ENCODE measurements at regions of chr19 and their contacts with region 1.

Region 1: GRCh38 chr19:50465986-50466771 is 10.1 kb upstream of the EMC10 start:
- DNase-seq: no peak
- H3K4me3 ChIP-seq: no peak overlapping the region
- H3K27ac ChIP-seq: no peak overlapping the region
- H3K4me1 ChIP-seq: no peaks in the 10 kb centered on the region
- H3K27me3 ChIP-seq: peaks cover 0 to 9% of the 10 kb centered on the region in 2 donors
- CTCF ChIP-seq: no peak
- POLR2A ChIP-seq: no peak

Region 2: DNA sequence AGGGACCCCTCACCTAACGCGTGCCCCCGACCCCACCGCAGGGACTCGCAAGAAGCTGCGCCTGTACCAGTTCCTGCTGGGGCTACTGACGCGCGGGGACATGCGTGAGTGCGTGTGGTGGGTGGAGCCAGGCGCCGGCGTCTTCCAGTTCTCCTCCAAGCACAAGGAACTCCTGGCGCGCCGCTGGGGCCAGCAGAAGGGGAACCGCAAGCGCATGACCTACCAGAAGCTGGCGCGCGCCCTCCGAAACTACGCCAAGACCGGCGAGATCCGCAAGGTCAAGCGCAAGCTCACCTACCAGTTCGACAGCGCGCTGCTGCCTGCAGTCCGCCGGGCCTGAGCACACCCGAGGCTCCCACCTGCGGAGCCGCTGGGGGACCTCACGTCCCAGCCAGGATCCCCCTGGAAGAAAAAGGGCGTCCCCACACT is 38.2 kb before region 1 on chr19:
- intact Hi-C with region 1: loop called (anchors 2 kb)
- DNase-seq: peak; percentile 88 to 89
- H3K4me3 ChIP-seq: peak overlapping the region; percentile 10 to 58 (median 39)
- H3K27ac ChIP-seq: peak overlapping the region; percentile 57 to 58
- H3K4me1 ChIP-seq: peaks cover 0 to 4% of the 10 kb centered on the region in 2 donors
- H3K27me3 ChIP-seq: peaks cover 0 to 4% of the 10 kb centered on the region in 2 donors
- CTCF ChIP-seq: no peak
- POLR2A ChIP-seq: no peak

Region 3: DNA sequence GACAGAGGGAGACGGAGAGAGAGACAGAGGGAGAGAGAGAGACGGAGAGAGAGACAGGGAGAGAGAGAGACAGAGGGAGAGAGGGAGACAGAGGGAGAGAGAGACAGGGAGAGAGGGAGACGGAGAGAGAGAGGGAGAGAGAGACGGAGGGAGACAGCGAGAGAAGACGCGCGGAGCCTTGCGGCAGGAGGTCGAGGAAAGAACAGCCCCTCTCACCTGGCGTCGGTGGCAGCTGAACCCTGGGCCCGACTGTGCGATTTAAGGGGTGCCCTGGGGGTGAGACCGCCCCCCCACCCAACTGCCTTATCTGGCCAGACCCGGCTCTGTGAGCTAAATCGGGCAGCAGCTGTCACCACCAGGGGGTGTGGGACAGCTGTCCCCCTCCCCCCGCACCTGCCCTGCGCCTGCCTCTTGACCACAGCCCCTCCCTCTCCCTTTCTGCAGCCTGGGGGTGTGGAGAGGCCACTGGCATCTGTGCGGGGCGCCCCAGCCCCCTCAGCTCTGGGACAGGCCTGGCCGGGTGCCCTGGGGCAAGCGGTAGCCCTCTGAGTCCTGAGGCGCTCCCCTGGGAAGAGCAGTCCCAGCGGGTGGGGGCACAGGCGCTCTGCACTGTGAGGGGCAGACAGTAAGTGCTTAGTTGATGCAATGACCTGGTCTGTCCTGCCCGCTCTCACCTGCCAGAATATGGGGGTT is 34.0 kb after region 1 on chr19:
- intact Hi-C with region 1: no loop called
- DNase-seq: no peak
- H3K4me3 ChIP-seq: no peak overlapping the region
- H3K27ac ChIP-seq: no peak overlapping the region
- H3K4me1 ChIP-seq: no peaks in the 10 kb centered on the region
- H3K27me3 ChIP-seq: no peaks in the 10 kb centered on the region
- CTCF ChIP-seq: no peak
- POLR2A ChIP-seq: no peak

Region 4: DNA sequence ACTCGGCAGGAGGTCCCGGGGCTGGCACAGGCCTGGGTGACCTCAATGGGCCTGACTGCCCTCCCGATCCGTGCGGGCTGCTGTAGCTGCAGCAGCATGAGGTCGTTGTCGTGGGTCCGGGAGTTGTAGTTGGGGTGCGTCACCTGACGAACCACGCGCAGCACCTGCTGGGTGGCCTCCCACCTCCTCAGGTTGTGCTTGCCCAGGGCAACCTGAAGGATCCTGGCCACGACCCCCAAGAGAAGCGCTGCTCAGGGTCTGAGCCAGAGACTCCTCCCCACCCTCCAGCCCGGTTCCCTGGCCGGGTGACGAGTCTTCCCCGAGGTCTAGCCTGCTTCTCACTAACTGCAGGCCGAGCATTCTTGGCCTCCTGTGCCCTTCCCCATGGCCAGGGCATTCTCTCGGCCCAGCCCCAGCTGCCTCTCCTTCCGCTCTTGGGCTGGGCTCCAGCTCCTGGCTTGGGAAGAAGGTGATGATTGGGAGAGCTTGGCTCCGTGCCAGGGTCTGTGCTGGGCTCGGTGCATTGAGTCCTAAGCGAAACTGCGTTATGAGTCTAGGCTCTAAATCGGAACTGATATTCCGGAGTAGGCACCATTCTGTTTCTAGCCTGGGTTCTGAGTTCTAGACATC is 613.4 kb after region 1 on chr19:
- intact Hi-C with region 1: no loop called
- DNase-seq: no peak
- H3K4me3 ChIP-seq: no peak overlapping the region
- H3K27ac ChIP-seq: no peak overlapping the region
- H3K4me1 ChIP-seq: no peaks in the 10 kb centered on the region
- H3K27me3 ChIP-seq: no peaks in the 10 kb centered on the region
- CTCF ChIP-seq: no peak
- POLR2A ChIP-seq: no peak

Measured in breast epithelium (tissue), 4 donors.